ENCODE measurements at regions of chr20 and their contacts with region 1.

Region 1: GRCh38 chr20:59032023-59032712 is at the start of gene ATP5F1E:
- DNase-seq: peak; percentile 97 to 98 (median 97)
- H3K4me3 ChIP-seq: peak within 1 kb of the TSS; percentile 55
- H3K4me3 Mint-ChIP-seq: peak within 1 kb of the TSS; percentile 91 to 99 (median 95)
- H3K27ac ChIP-seq: peak within 1 kb of the TSS; percentile 69
- H3K27ac Mint-ChIP-seq: peak within 1 kb of the TSS; percentile 80 to 98 (median 95)
- H3K4me1 ChIP-seq: peaks cover 45% of the 10 kb centered on the region
- H3K4me1 Mint-ChIP-seq: peaks cover 49 to 60% (median 53%) of the 10 kb centered on the region in 3 donors
- H3K27me3 ChIP-seq: no peaks in the 10 kb centered on the region
- H3K27me3 Mint-ChIP-seq: peaks cover 0 to 2% of the 10 kb centered on the region in 2 donors
- total RNA-seq, gene ATP5F1E: 98.1 to 102 TPM

Region 2: DNA sequence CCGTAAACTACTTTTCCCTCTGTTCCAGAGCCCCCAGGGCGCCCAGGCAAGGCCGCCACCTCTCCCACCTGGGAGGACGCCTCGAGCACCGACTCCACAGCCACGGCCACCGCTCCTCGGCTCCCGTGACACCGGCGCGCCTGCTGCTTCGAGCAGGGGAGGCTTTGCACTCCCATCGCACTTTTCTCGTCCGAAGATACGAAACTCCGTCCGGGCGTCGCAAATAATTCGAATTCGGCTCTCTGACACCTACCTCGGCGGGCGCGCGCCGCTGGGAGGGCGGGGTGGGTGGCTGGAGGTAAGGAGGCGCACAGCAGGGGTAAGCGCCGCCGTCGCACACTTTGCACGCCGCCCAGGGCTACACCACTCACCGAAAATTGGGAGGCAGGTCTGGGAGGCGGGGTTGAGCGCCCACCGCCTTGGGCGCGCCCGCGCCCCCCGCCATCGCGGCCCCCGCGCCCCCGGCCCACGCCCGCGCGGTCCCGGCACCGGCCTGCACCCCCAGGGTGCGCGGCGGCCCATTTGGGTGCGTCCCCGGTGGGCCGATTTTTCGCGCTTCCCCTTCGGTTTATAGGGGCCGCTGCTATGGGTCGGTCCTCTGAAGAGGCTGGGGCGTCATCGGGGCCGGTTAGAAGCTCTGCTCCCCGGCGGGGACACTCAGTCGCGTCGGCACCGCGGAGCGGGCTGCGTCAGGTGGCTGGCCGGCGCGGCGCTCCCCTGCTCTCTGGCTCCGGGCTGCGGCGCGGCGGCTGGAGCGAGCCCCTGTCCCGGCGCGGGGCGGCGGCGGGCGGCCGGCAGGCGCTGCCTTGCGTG is 143.4 kb before region 1 on chr20:
- CTCF ChIA-PET with region 1: no interaction called
- POLR2A ChIA-PET with region 1: interaction called, 23 read pairs
- DNase-seq: peak; percentile 73 to 91 (median 84)
- H3K4me3 ChIP-seq: peak overlapping the region; percentile 72
- H3K4me3 Mint-ChIP-seq: peak overlapping the region; percentile 76 to 89 (median 82)
- H3K27ac ChIP-seq: peak overlapping the region; percentile 87
- H3K27ac Mint-ChIP-seq: peak overlapping the region; percentile 24 to 95 (median 88)
- H3K4me1 ChIP-seq: peaks cover 19% of the 10 kb centered on the region
- H3K4me1 Mint-ChIP-seq: peaks cover 20 to 47% (median 26%) of the 10 kb centered on the region in 3 donors
- H3K27me3 ChIP-seq: no peaks in the 10 kb centered on the region
- H3K27me3 Mint-ChIP-seq: peaks cover 0 to 5% of the 10 kb centered on the region in 2 donors

Region 3: DNA sequence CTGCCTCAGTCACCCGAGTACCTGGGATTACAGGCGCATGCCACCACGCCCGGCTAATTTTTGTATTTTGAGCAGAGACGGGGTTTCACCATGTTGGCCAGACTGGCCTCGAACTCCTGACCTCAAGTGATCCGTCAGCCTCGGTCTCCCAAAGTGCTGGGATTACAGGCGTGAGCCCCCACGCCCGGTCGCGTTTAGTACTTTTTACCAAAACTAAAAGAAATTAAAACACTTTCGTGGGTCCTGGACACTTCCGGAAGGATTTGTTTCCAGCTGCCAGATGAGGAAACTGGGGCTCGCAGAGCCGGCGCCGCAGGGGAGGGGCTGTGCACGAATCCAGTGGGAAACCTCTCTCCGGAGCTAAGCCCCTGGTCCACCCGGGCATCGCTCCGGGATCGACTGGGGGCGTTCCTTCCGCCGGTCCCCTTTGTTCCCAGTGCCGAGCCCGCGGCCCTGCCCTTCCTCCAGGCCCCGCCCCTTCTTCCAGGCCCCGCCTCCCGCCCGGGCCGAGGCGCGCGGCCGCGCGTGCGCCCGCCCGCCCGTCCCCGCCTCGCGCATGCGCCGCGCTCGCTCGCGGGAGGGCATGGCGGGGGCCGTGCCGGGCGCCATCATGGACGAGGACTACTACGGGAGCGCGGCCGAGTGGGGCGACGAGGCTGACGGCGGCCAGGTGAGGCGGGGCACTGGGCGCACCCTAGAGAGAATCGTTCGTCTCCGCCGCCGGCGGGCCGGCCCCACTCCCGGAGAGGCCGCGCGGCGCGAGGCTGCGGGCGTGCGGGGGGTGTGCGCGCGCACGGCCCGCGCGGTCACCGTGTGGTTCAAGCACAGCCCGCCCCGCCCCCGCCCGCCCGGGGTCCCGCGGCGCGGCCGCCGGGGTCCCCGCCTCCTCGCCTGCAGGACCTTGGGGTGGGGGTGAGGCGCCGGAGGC is 51.2 kb before region 1 on chr20 and contains the start of gene NELFCD:
- CTCF ChIA-PET with region 1: interaction called, 3 read pairs
- POLR2A ChIA-PET with region 1: interaction called, 14 read pairs
- DNase-seq: peak; percentile 85 to 90 (median 87)
- H3K4me3 ChIP-seq: peak within 1 kb of the TSS; percentile 83
- H3K4me3 Mint-ChIP-seq: peak within 1 kb of the TSS; percentile 85 to 97 (median 95)
- H3K27ac ChIP-seq: peak within 1 kb of the TSS; percentile 70
- H3K27ac Mint-ChIP-seq: peak within 1 kb of the TSS; percentile 87 to 95 (median 92)
- H3K4me1 ChIP-seq: peaks cover 30% of the 10 kb centered on the region
- H3K4me1 Mint-ChIP-seq: peaks cover 34 to 40% (median 38%) of the 10 kb centered on the region in 3 donors
- H3K27me3 ChIP-seq: no peaks in the 10 kb centered on the region
- H3K27me3 Mint-ChIP-seq: peaks cover 0 to 10% of the 10 kb centered on the region in 2 donors
- total RNA-seq, gene NELFCD: 101 to 108 TPM

Region 4: GRCh38 chr20:59042796-59043660 is 10.9 kb after region 1 on chr20:
- CTCF ChIA-PET with region 1: interaction called, 24 read pairs
- POLR2A ChIA-PET with region 1: interaction called, 35 read pairs
- DNase-seq: peak; percentile 93 to 95 (median 94)
- H3K4me3 ChIP-seq: peak overlapping the region; percentile 76
- H3K4me3 Mint-ChIP-seq: peak overlapping the region; percentile 83 to 95 (median 92)
- H3K27ac ChIP-seq: peak overlapping the region; percentile 89
- H3K27ac Mint-ChIP-seq: peak overlapping the region; percentile 89 to 98 (median 97)
- H3K4me1 ChIP-seq: peaks cover 42% of the 10 kb centered on the region
- H3K4me1 Mint-ChIP-seq: peaks cover 42 to 61% (median 56%) of the 10 kb centered on the region in 3 donors
- H3K27me3 ChIP-seq: no peaks in the 10 kb centered on the region
- H3K27me3 Mint-ChIP-seq: no peaks in the 10 kb centered on the region

Region 5: DNA sequence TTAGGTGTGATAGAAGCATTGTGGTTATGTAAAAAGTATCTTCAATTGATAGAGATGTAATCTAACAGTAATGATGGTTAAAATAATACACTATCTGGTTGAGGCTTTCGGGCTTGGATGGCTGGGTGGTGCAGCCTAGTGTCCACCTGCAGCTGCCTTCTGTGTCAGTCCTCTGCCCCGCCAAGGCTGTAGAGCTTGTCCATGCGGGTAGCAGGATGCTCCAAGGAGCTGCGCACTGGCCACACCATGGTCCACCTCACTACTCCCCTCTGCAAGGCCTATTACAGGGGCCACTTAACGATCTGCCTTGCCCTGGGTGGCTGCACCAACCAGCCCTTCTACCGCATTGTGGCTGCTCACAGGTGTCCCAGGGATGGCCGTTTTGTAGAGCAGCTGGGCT is 80.8 kb after region 1 on chr20:
- CTCF ChIA-PET with region 1: no interaction called
- POLR2A ChIA-PET with region 1: no interaction called
- DNase-seq: no peak
- H3K4me3 ChIP-seq: no peak overlapping the region
- H3K4me3 Mint-ChIP-seq: no peak overlapping the region
- H3K27ac ChIP-seq: no peak overlapping the region
- H3K27ac Mint-ChIP-seq: peak overlapping the region in 1 of 8 donors; percentile 24
- H3K4me1 ChIP-seq: peaks cover 13% of the 10 kb centered on the region
- H3K4me1 Mint-ChIP-seq: peaks cover 13 to 18% (median 18%) of the 10 kb centered on the region in 3 donors
- H3K27me3 ChIP-seq: no peaks in the 10 kb centered on the region
- H3K27me3 Mint-ChIP-seq: no peaks in the 10 kb centered on the region

Measured in CD8-positive, alpha-beta memory T cell (primary cell).